ENCODE measurements at regions of chr10 and their contacts with region 1.

Region 1: DNA sequence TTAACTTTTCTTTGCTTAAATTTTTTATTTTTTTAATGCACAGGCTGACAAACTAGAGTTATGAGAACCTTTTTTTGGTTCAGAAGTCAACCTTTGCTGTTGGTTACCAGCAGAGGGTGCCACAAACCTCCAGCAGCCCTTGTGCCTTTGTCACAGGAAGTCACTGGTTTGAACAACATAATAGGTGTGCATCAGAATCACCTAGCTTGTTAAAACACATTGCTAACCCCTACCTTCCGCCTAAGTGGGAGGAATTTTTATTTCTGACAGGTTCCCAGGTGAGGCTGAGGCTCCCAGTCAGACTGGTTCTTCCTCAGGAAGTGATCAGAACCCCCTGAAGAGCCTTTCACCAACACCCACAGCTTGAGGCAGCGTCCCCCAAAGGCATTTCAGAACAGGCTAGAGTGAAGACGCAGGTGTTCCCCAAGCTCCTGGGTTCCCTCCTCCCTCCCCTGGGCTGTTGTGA is 22.6 kb upstream of the VDAC2 start:
- DNase-seq: peak; percentile 56 to 61
- H3K4me3 ChIP-seq: no peak overlapping the region
- H3K27ac ChIP-seq: peak overlapping the region; percentile 2; the same call in 1 of the 2 replicates
- H3K4me1 ChIP-seq: peaks cover 0 to 12% (median 7%) of the 10 kb centered on the region in 4 experiments; a peak in 5 of 7 replicates
- H3K27me3 ChIP-seq: no peaks in the 10 kb centered on the region
- CTCF ChIP-seq: peak; percentile 46 to 73 (median 64)
- EP300 ChIP-seq: 0 out of 3 replicates have a peak, but pooled peaks of 1 of the 2 experiments have one; percentile 33
- POLR2A ChIP-seq: peak in 1 of 2 experiments; percentile 44; a peak in 1 of 3 replicates
- RAD21 ChIP-seq: peak; percentile 73 to 77

Region 2: GRCh38 chr10:75175046-75175445 is 12.9 kb before region 1 on chr10:
- CTCF ChIA-PET with region 1: interaction called, 12 read pairs
- POLR2A ChIA-PET with region 1: interaction called, 4 read pairs
- DNase-seq: no peak
- H3K4me3 ChIP-seq: no peak overlapping the region
- H3K27ac ChIP-seq: no peak overlapping the region
- H3K4me1 ChIP-seq: no peaks in the 10 kb centered on the region
- H3K27me3 ChIP-seq: no peaks in the 10 kb centered on the region
- CTCF ChIP-seq: no peak
- EP300 ChIP-seq: no peak
- POLR2A ChIP-seq: no peak
- RAD21 ChIP-seq: no peak

Region 3: GRCh38 chr10:75202321-75203045 is 14.5 kb after region 1 on chr10:
- CTCF ChIA-PET with region 1: interaction called, 26 read pairs
- POLR2A ChIA-PET with region 1: interaction called, 6 read pairs
- DNase-seq: no peak
- H3K4me3 ChIP-seq: no peak overlapping the region
- H3K27ac ChIP-seq: no peak overlapping the region
- H3K4me1 ChIP-seq: peaks cover under 1 to 6% (median 3%) of the 10 kb centered on the region in 4 experiments
- H3K27me3 ChIP-seq: no peaks in the 10 kb centered on the region
- CTCF ChIP-seq: no peak
- EP300 ChIP-seq: no peak
- POLR2A ChIP-seq: no peak
- RAD21 ChIP-seq: no peak